MCF 10A (cell line): ENCODE measurements at regions of chr11 and their contacts with region 1.

Region 1: DNA sequence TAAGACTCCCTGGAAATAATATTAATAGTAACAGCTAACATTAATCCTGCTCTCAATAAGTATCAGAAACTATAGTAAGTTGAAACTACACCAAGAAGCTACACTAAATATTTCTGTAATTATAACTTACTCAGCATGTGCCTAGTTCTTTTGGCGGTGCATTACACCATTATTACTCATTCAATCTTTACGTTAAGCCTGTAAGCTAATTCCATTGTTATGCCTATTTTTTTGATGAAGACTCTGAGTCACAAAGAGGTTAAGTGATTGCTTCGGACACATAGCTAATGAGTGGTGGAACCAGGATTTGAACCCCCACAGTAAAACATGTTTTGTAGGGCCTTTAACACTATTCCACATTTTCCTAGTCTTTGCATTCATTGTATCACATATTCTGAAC is 111.6 kb downstream of the RASSF10 start:
- DNase-seq: peak; percentile 81
- H3K4me3 Mint-ChIP-seq: no peak overlapping the region
- H3K27ac Mint-ChIP-seq: peak overlapping the region; percentile 65
- H3K4me1 Mint-ChIP-seq: peaks cover 31% of the 10 kb centered on the region
- H3K27me3 Mint-ChIP-seq: no peaks in the 10 kb centered on the region
- CTCF ChIP-seq: no peak

Region 2: GRCh38 chr11:12995188-12995587 is 125.5 kb before region 1 on chr11:
- CTCF ChIA-PET with region 1: no interaction called
- POLR2A ChIA-PET with region 1: no interaction called
- intact Hi-C with region 1: no loop called
- DNase-seq: no peak
- H3K4me3 Mint-ChIP-seq: no peak overlapping the region
- H3K27ac Mint-ChIP-seq: no peak overlapping the region
- H3K4me1 Mint-ChIP-seq: no peaks in the 10 kb centered on the region
- H3K27me3 Mint-ChIP-seq: no peaks in the 10 kb centered on the region
- CTCF ChIP-seq: no peak

Region 3: DNA sequence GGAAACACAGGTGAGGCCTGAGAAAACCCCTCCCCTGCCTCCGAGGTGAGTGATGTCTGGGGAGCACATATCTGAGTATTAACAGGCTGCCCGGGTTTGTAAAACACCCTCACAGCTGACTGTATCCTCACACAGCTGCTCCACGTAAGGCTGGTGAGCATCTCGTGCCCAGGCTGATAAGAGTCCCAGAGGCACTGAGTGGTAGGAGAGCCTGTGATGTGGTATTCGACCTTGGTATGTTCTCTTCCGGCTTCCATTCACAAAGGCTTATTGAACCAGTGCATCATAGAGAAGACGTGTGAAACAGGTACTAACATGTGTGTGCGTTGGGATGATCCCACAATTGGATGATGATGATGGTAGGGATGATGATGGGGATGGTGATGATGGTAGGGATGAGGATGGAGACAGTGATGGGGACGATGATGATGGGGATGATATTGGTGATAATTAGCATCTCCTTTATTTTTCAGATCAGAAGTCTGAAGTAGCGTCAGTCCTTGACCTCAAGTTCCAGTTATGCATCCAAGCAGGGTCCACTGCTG is 39.8 kb before region 1 on chr11:
- CTCF ChIA-PET with region 1: no interaction called
- POLR2A ChIA-PET with region 1: no interaction called
- intact Hi-C with region 1: no loop called
- DNase-seq: no peak
- H3K4me3 Mint-ChIP-seq: no peak overlapping the region
- H3K27ac Mint-ChIP-seq: no peak overlapping the region
- H3K4me1 Mint-ChIP-seq: peaks cover 5% of the 10 kb centered on the region
- H3K27me3 Mint-ChIP-seq: peaks cover 15% of the 10 kb centered on the region
- CTCF ChIP-seq: no peak

Region 4: DNA sequence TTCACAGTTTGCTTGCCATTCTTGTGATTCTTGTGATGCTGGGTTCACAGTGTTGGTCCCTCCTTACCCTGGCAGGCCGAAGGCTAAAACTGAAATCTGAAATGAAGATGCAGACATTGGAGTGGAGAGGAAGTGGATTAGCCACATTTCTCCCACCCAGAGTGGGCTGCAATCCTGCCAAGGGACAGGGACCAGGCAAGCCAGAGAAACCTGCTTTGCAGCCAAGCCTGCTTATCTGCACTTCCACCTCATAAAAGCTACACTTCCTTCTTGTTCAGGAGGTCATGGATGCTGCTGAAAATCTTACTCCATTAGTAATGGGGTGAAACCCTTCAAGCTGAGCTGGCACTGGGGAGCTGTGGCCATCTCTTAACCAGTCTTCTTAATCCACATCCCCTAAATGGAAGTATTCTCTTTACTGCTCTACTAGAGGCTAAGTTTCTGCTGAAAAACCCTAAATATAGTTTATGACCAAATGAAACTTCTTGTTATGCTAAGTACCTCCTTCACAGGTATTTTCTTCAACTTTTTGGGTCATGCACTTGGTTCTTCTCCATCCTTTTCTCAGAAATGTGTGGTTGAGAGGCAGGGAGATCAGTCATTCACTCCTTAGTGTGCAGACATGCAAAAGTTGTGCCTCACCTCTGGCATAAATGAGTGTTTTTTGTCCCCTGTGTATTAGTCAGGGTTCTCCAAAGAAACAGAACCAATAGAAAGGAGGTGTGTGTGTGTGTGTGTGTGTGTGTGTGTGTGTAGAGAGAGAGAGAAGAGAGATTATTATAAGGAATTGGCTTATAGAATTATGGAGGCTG is 23.0 kb after region 1 on chr11:
- CTCF ChIA-PET with region 1: no interaction called
- POLR2A ChIA-PET with region 1: no interaction called
- intact Hi-C with region 1: no loop called
- DNase-seq: no peak
- H3K4me3 Mint-ChIP-seq: no peak overlapping the region
- H3K27ac Mint-ChIP-seq: no peak overlapping the region
- H3K4me1 Mint-ChIP-seq: peaks cover 8% of the 10 kb centered on the region
- H3K27me3 Mint-ChIP-seq: no peaks in the 10 kb centered on the region
- CTCF ChIP-seq: no peak

Region 5: GRCh38 chr11:13160346-13160745 is 39.7 kb after region 1 on chr11:
- CTCF ChIA-PET with region 1: no interaction called
- POLR2A ChIA-PET with region 1: interaction called, 13 read pairs
- intact Hi-C with region 1: no loop called
- DNase-seq: peak; percentile 76
- H3K4me3 Mint-ChIP-seq: no peak overlapping the region
- H3K27ac Mint-ChIP-seq: peak overlapping the region; percentile 63
- H3K4me1 Mint-ChIP-seq: peaks cover 12% of the 10 kb centered on the region
- H3K27me3 Mint-ChIP-seq: no peaks in the 10 kb centered on the region
- CTCF ChIP-seq: no peak